Mucosa of descending colon (tissue), 3 donors: ENCODE measurements at regions of chr11 and their contacts with region 1.

Region 1: DNA sequence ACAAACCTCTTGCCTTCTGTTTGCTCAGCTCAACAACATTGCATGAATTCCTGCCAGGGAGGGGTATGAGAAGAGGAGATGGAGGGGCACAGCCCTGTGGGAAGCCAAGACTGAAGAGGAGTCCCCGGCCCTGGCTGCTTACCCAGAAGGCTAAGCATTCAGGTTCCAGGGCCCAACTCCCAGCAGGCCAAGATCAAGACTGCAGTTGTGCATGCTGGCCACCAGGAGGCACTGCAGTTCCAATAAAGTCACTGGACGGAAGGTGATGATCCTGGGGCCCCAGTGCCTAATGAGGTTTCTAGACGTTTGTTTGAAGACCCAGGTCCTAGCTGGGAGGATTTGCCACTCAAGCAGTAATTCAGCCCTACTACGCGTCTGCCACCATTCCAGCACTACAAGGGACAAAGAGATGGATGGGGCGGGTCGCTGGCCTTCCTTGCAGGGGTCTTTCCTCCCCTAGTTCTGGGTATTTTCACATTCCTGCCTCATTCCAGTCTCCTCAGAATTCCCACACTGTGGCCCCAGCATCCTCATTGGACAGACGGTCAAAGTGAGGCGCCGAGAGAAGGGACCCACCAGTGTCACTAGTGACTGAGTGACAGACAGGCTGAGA is 23.6 kb downstream of the ALX4 start:
- DNase-seq: peak in 2 of 3 donors; percentile 43 to 63
- ATAC-seq: peak; percentile 84
- H3K4me3 ChIP-seq: no peak overlapping the region
- H3K4me1 ChIP-seq: no peaks in the 10 kb centered on the region
- CTCF ChIP-seq: peak; percentile 84

Region 2: DNA sequence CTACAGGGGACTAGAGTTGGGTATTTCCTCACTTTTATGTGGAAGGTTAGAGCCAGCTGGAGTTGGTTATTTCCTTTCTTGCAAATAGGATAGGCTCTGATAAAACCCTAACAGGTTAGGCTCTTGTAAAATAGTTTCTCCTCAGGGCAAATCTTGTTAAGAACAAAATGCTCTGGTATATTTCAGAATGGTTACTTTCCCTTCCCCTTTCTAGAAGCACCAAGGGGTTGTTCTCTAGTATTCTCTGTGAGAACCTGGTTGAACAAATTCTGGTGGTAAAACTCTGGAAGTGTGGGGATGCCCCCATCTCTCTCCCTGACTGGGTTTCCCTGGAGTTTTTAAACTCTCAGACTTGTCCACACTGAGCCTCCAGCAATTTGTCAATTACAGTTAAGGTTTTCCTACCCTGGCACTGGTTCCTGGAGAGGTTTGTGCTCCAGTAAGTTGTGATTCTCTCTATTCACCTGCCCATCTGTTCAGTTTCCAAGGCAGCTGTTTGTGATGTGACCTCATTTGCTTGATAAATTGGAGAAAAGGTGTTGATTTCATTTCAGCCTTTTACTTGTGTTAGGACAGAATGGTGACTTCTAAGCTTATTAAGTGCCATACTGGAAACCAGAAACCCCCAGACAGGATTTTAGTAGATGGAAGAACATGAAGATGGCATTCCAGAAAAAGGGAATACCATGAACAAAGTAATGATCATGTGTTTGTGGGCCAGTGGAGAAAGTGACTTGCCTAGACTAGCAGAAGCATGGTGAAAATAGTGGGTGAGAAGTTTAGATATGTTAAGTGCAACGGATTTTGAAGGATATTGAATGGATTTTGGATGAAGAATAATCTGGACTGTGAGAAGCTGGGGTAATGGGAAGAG is 126.3 kb before region 1 on chr11:
- intact Hi-C with region 1: no loop called
- DNase-seq: no peak
- ATAC-seq: no peak
- H3K4me3 ChIP-seq: no peak overlapping the region
- H3K4me1 ChIP-seq: no peaks in the 10 kb centered on the region
- CTCF ChIP-seq: no peak

Region 3: GRCh38 chr11:44538375-44539054 is 252.1 kb after region 1 on chr11:
- intact Hi-C with region 1: loop called (anchors 2 to 5 kb)
- DNase-seq: peak; percentile 65 to 83 (median 80)
- ATAC-seq: peak; percentile 95
- H3K4me3 ChIP-seq: no peak overlapping the region
- H3K4me1 ChIP-seq: no peaks in the 10 kb centered on the region
- CTCF ChIP-seq: peak; percentile 92

Region 4: GRCh38 chr11:44611687-44612434 is 325.5 kb after region 1 on chr11:
- intact Hi-C with region 1: loop called in 1 of 2 experiments (anchors 10 kb)
- DNase-seq: peak in 2 of 3 donors; percentile 29 to 75
- ATAC-seq: peak; percentile 61
- H3K4me3 ChIP-seq: no peak overlapping the region
- H3K4me1 ChIP-seq: peaks cover 8% of the 10 kb centered on the region
- CTCF ChIP-seq: no peak